Calu3 (cell line): ENCODE measurements at regions of chr6 and their contacts with region 1.

Region 1: DNA sequence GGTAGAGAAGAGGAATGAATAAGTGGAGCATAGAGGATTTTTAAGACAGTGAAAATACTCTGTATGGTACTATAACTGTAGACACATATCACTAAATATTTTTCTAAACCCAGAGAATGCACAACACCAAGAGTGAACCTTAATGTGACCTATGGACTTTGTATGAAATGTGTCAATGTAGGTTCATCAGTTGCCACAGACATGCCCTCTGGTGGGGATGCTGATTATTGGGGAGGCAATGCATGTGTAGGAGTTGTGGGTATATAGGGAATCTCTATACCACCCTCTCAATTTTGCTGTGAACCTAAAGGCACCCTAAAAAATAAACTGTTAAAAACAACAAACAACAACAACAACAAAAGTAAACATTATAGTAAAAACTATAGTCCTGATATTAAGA is 293.7 kb downstream of the RNF144B start:
- DNase-seq: no peak
- H3K4me3 Mint-ChIP-seq: no peak overlapping the region
- H3K27ac Mint-ChIP-seq: no peak overlapping the region
- H3K4me1 Mint-ChIP-seq: no peaks in the 10 kb centered on the region
- H3K27me3 Mint-ChIP-seq: no peaks in the 10 kb centered on the region
- CTCF ChIP-seq: no peak

Region 2: GRCh38 chr6:18533793-18534192 is 147.0 kb before region 1 on chr6:
- CTCF ChIA-PET with region 1: no interaction called
- intact Hi-C with region 1: loop called (anchors 5 kb)
- DNase-seq: no peak
- H3K4me3 Mint-ChIP-seq: no peak overlapping the region
- H3K27ac Mint-ChIP-seq: no peak overlapping the region
- H3K4me1 Mint-ChIP-seq: peaks cover 6% of the 10 kb centered on the region
- H3K27me3 Mint-ChIP-seq: peaks cover 13% of the 10 kb centered on the region
- CTCF ChIP-seq: no peak